MCF 10A (cell line): ENCODE measurements at regions of chr6 and their contacts with region 1.

Region 1: DNA sequence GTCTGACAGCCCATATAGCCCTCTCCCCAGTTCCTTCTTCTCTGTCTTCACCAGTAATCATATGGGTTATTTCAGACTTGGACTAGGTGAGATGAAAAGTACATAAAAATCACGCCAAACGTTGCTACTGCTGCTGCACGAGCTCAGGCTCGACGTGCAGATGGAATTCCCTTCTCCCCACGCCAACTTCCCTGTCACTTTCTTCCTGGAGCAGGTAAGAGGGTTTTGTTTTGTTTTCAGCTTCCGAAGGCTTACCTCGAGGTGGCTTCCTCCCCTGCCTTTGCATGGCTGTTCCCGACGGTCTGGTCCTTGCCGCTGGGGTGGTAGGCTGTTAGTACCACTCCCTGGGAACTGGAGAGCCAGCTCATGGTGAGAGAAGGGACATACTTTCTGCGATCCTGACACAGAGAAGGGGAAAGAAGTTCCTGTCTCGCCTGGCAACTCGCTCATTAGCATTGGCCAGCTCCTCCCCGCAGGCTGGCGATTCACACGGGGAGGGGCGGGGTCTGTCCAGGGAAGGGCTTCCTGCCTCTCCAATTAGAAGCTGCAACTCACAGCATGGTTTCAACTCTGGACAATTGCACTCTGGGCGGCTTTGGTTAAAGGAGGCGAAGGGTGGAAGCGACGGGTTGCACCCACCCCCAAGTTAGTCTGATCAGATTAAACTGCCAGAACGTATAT is at the start of gene ARHGAP18:
- DNase-seq: peak; percentile 96
- H3K4me3 Mint-ChIP-seq: peak within 1 kb of the TSS; percentile 84
- H3K27ac Mint-ChIP-seq: peak within 1 kb of the TSS; percentile 79
- H3K4me1 Mint-ChIP-seq: peaks cover 12% of the 10 kb centered on the region
- H3K27me3 Mint-ChIP-seq: no peaks in the 10 kb centered on the region
- CTCF ChIP-seq: no peak
- total RNA-seq, gene ARHGAP18: 14.6 and 22.9 TPM in 2 replicates

Region 2: GRCh38 chr6:129015721-129016120 is 694.2 kb before region 1 on chr6:
- CTCF ChIA-PET with region 1: no interaction called
- POLR2A ChIA-PET with region 1: no interaction called
- intact Hi-C with region 1: no loop called
- DNase-seq: no peak
- H3K4me3 Mint-ChIP-seq: no peak overlapping the region
- H3K27ac Mint-ChIP-seq: no peak overlapping the region
- H3K4me1 Mint-ChIP-seq: no peaks in the 10 kb centered on the region
- H3K27me3 Mint-ChIP-seq: peaks cover 72% of the 10 kb centered on the region
- CTCF ChIP-seq: no peak

Region 3: DNA sequence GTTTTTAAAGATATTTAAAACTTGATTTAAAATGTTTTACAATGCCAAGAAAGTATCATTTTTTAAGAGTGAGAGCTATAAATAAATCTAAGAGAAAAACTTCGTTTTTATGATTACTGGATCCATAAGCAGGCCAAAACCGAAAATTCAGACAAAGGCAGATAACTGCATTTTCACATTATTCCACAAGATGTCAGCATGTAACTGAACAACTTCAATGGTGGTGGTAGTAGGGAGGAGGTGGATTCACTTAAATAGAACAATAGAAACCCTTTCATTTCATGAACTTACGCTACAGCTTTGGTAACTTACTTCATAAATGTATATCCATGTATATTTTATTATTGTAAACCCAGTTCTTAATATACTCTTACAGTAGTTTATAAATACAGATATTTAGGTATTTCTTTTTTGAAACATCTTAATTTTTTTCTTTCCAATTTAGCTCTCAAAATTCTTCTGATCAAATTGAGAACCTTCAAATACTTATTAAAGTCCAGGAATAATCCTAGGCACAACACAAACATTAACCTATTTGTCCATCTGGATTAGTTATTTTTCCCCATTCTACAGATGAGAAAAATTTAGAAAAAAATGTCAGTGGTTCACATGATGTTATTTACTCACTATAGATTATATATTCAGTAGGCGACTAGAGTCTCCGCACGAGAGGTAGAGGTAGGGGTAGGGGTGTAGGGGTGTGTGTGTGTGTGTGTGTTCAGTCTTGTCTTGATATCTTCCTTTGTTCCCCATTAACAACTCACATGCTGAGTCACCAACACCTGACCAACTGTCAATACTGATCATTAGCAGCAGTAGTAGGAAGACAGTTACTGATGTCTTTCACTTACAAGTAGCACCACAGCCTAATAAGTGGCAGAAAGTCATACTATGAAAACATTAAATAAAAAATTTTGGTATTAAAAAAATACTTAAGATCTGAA is 111.4 kb before region 1 on chr6:
- CTCF ChIA-PET with region 1: interaction called, 10 read pairs
- POLR2A ChIA-PET with region 1: interaction called, 14 read pairs
- intact Hi-C with region 1: no loop called
- DNase-seq: peak; percentile 77
- H3K4me3 Mint-ChIP-seq: no peak overlapping the region
- H3K27ac Mint-ChIP-seq: no peak overlapping the region
- H3K4me1 Mint-ChIP-seq: no peaks in the 10 kb centered on the region
- H3K27me3 Mint-ChIP-seq: no peaks in the 10 kb centered on the region
- CTCF ChIP-seq: peak; percentile 71

Region 4: DNA sequence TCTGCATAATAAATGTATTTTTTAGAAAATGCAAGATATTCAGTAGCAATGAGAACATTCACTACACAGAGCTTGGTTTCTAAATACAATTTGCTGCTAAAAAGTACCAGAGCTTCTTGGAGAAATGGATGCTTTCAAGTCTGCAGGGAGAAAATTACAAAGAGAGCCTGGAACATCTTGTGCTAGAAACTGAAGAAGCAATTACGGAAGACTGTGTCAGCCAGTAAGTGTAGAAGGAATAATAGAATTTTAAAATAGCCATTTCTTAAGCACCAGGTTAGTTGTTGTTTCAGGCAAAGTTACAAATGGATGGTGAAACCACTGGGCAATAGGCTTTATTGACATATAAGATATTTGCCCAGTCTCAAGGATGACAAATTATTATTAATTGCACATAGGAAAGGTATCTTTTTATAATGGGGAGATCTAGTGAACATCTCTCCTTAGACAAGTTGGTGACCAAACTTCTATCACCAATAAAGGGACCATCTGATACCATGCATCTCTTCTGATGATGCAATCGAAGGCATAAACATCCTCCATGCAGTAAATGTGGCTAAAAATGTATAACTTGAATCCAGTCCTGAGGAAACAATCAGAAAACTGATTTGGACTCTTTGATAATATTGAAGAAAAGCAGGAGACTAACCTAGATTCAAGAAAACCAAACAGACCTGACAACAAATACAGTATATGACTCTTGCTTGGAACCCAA is 81.7 kb before region 1 on chr6:
- CTCF ChIA-PET with region 1: no interaction called
- POLR2A ChIA-PET with region 1: interaction called, 19 read pairs
- intact Hi-C with region 1: loop called (anchors 5 kb)
- DNase-seq: no peak
- H3K4me3 Mint-ChIP-seq: no peak overlapping the region
- H3K27ac Mint-ChIP-seq: no peak overlapping the region
- H3K4me1 Mint-ChIP-seq: peaks cover 23% of the 10 kb centered on the region
- H3K27me3 Mint-ChIP-seq: no peaks in the 10 kb centered on the region
- CTCF ChIP-seq: no peak

Region 5: DNA sequence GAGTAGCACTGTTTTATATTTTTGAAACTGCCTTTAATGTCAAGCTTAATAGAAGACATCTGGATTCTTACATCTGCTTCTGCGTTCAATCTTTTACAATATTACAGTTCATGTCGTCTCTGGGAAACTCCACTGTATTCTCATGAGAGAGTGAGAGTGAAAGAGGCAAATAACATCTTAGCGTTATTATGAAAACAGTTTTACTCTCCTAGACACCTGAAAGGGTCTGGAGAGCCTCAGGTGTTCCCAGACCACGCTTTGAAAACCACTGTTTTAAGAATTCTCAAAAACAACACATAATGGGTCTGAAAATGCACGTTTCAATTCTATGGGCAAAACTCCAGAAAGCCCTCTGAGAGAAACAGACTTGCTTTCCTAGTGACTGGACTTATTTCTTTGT is 63.3 kb before region 1 on chr6:
- CTCF ChIA-PET with region 1: interaction called, 4 read pairs
- POLR2A ChIA-PET with region 1: interaction called, 23 read pairs
- intact Hi-C with region 1: loop called (anchors 2 kb)
- DNase-seq: no peak
- H3K4me3 Mint-ChIP-seq: no peak overlapping the region
- H3K27ac Mint-ChIP-seq: peak overlapping the region; percentile 95
- H3K4me1 Mint-ChIP-seq: peaks cover 36% of the 10 kb centered on the region
- H3K27me3 Mint-ChIP-seq: no peaks in the 10 kb centered on the region
- CTCF ChIP-seq: no peak

Region 6: DNA sequence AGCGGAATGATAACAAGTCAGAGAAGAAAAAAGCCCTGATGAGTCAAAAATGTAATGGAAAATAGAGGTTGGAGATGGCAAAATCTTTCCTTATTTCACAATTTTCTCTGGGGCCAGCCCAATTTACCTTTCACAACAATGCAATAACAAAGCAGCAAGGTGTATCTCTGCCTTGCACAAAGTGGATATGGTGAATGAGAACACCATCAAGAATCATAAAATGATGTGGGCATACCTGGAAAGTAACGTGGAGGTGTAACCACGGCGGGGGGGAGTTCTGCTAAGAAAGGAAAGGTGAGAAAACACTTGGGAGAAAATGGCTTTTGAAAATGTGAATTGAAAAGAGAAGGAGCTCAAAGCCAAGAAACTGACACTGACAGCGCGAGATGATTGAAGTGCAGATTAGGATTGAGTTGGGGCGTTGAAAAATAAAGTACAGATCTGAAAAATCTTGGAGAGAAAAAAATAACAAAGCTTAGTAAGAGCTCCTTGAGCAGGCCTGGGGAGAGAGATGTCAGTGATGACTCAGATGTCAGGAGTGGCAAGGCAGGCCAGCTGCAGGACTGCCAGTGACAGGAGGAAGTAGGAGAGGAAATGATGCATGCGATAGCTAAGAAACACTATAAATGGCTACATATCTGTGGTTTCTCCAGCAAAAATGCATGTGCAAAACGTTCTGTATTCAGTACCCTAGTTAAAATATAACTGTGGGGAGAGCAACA is 26.1 kb before region 1 on chr6:
- CTCF ChIA-PET with region 1: interaction called, 5 read pairs
- POLR2A ChIA-PET with region 1: interaction called, 81 read pairs
- intact Hi-C with region 1: no loop called
- DNase-seq: peak; percentile 94
- H3K4me3 Mint-ChIP-seq: peak overlapping the region; percentile 55
- H3K27ac Mint-ChIP-seq: peak overlapping the region; percentile 65
- H3K4me1 Mint-ChIP-seq: peaks cover 67% of the 10 kb centered on the region
- H3K27me3 Mint-ChIP-seq: no peaks in the 10 kb centered on the region
- CTCF ChIP-seq: no peak

Region 7: DNA sequence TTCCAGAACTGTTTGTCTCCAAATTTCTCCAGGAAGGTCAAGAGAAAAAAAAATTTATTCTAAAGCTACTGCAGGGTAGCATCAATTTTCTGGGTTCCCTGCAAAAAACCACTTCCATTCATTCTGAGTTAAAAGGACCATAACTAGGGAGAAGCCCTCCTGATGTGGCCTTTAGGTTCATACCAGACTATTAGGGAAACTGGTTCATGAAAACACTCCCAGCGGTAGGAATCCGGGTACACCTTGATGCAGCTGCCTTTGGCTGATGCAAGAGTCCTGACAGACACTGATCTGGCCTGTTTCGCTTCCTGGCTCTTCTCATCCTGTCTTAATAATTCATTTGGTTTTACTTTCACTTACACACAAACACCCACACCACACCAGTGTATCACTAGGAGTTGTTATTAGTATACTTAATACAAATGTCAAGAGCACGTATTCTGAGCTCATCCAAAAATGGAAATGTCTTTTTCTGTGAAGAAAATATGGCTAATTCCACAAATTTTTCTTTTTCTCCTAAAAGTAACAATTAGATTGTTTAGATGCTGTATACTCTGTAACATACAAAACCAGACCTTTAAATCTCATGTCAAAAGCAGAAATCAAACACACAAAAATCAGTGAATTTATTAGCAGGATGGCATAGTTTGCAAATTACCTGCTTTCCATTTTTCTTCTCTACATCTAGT is 38.4 kb after region 1 on chr6:
- CTCF ChIA-PET with region 1: no interaction called
- POLR2A ChIA-PET with region 1: interaction called, 34 read pairs
- intact Hi-C with region 1: no loop called
- DNase-seq: peak; percentile 93
- H3K4me3 Mint-ChIP-seq: peak overlapping the region; percentile 47
- H3K27ac Mint-ChIP-seq: peak overlapping the region; percentile 87
- H3K4me1 Mint-ChIP-seq: peaks cover 36% of the 10 kb centered on the region
- H3K27me3 Mint-ChIP-seq: no peaks in the 10 kb centered on the region
- CTCF ChIP-seq: peak; percentile 28